Spleen (tissue), 13 donors: ENCODE measurements at regions of chr7 and their contacts with region 1.

Region 1: DNA sequence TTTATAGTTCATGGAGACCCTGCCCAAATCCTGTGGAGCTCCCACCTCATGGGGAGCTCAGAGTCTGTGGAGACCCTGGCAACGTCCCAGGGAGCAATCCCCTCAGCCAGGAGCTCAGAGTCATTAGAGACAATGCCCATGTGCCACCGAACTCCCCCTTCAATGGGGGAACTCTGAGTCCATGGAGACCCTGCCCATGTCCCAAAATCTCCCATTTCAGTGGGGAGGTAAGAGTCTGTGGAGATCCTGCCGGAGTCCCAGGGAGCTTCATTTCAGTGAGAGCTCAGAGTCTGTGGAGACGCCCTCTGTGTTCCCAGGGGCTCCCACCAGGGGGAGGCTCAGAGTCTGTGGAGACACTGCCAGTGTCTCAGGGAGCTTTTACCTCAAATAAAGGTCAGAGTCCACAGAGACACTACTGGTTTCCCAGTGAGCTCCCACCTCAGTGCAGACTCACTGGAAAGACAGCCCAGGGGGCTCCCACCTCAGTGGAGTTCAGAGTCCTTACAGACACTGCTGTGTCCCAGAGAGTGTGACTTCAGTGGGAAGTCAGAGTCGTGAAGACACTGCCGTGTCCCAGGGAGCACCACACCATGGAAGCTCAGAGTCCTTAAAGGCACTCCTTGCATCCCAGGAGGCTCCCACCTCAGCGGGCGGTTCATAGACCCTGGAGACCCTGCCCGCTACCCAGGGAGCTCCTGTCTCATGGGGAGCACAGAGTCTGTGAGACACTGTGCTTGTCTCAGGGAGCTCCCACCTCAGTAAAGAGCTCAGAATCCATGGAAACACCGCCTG is 5.0 kb downstream of the MYO1G start:
- DNase-seq: no peak
- H3K4me3 ChIP-seq: no peak overlapping the region
- H3K27ac ChIP-seq: peak overlapping the region in 2 of 8 donors; percentile 7 to 94
- H3K4me1 ChIP-seq: peaks cover 12 to 54% (median 36%) of the 10 kb centered on the region in 6 donors
- H3K27me3 ChIP-seq: no peaks in the 10 kb centered on the region
- CTCF ChIP-seq: peak in 9 of 11 experiments; percentile 38 to 69 (median 56)
- POLR2A ChIP-seq: no peak

Region 2: GRCh38 chr7:45013465-45013967 is 39.7 kb after region 1 on chr7:
- intact Hi-C with region 1: no loop called
- DNase-seq: no peak
- H3K4me3 ChIP-seq: no peak overlapping the region
- H3K27ac ChIP-seq: peak overlapping the region in 1 of 8 donors; percentile 20
- H3K4me1 ChIP-seq: peaks cover 0 to 40% (median 10%) of the 10 kb centered on the region in 6 donors
- H3K27me3 ChIP-seq: no peaks in the 10 kb centered on the region
- CTCF ChIP-seq: no peak
- POLR2A ChIP-seq: no peak

Region 3: DNA sequence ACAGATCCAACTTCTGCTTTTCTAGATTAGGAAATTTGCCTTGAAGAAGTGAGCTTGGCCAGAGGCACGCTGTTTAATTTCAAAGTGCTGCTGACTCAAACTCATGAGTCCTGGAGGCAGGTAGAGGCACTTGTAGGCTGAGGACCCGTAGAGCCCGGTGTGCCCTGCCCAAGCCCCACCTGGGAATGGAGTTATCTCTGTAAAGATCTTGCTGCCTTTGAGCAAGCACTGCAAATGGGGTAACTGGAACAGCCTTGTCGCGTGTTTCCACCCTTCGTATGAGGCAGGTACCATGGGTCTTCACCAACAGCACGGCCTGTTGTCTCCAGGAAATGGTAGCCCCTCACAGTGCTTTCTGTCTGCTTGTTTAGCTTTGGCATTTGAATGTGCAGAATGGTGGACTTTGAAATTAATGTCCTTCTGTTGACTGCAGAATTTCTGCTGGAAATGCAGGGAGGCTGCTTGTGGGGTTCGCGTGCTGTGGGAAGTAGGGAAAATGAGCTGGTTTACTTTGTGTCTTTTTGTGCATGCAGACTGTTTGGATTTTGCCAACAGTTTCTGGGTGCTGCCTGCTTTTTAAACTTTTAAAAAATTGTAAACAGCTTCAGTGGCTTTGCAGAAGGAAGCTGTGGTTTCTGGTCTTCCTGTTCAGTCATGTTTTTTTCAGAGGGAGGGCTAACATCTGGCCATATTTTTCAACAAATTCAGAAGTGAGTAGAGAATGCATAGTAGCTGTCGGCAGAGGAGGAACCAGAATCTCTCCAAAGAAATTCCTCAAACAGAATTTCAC is 53.4 kb after region 1 on chr7:
- intact Hi-C with region 1: loop called (anchors 10 kb)
- DNase-seq: peak; percentile 82
- H3K4me3 ChIP-seq: peak overlapping the region; percentile 36 to 88 (median 60)
- H3K27ac ChIP-seq: peak overlapping the region; percentile 81 to 95 (median 90)
- H3K4me1 ChIP-seq: peaks cover 27 to 80% (median 56%) of the 10 kb centered on the region in 6 donors
- H3K27me3 ChIP-seq: no peaks in the 10 kb centered on the region
- CTCF ChIP-seq: no peak
- POLR2A ChIP-seq: peak in 1 of 3 donors; percentile 16